ENCODE measurements at regions of chr12 and their contacts with region 1.

Region 1: DNA sequence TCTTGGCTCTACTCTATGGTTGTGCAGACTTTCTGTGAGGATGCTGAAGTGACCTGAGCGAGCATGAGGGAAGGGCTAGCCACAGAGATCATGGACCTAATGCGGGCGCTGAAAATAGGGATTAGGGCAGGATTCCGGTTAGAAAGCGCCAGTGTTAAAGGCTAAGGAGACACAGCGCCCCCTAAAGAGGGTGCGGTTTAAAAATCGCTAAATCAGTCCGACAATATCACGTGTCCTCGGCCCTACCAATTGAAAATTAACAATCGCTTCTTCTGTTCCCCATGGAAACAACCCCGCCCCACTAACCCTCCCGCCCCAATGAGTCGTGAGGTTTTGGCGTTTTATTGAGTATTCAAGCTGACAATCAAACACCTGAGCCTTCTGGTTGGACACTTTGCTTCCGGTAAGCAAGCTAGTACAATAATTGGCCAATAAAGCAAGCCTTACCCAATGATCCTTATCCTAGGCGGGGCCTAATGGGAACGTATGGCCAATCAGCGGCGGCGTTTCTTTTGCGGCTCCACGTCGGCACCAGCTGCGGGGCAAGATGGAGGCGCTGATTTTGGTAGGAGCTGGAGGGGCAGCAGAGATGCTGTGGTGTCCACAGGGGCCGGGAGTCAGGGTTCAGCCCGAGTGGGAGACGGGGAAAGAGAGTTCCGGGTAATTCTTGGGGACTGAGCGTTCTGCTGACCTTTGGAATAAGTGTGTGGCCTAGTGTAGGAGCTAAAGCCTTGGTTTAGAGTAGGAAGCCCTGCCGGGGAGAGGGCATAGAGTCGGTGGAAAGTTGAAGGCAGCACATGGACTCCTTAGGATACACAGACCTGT is at the start of gene COPZ1:
- DNase-seq: peak; percentile 99 to 100 (median 100)
- H3K4me3 ChIP-seq: peak within 1 kb of the TSS; percentile 38 to 99 (median 91)
- H3K27ac ChIP-seq: peak within 1 kb of the TSS; percentile 83 to 94
- H3K4me1 ChIP-seq: peaks cover 6 to 23% (median 18%) of the 10 kb centered on the region in 4 experiments
- H3K27me3 ChIP-seq: no peaks in the 10 kb centered on the region

Region 2: GRCh38 chr12:54214553-54215406 is 110.0 kb before region 1 on chr12:
- CTCF ChIA-PET with region 1: no interaction called
- POLR2A ChIA-PET with region 1: no interaction called
- DNase-seq: peak; percentile 94 to 96 (median 94)
- H3K4me3 ChIP-seq: peak overlapping the region in 6 of 7 experiments; percentile 21 to 75 (median 42)
- H3K27ac ChIP-seq: no peak overlapping the region
- H3K4me1 ChIP-seq: peaks cover 8 to 34% (median 30%) of the 10 kb centered on the region in 4 experiments
- H3K27me3 ChIP-seq: peaks cover 0 to 38% (median 23%) of the 10 kb centered on the region in 5 experiments

Region 3: DNA sequence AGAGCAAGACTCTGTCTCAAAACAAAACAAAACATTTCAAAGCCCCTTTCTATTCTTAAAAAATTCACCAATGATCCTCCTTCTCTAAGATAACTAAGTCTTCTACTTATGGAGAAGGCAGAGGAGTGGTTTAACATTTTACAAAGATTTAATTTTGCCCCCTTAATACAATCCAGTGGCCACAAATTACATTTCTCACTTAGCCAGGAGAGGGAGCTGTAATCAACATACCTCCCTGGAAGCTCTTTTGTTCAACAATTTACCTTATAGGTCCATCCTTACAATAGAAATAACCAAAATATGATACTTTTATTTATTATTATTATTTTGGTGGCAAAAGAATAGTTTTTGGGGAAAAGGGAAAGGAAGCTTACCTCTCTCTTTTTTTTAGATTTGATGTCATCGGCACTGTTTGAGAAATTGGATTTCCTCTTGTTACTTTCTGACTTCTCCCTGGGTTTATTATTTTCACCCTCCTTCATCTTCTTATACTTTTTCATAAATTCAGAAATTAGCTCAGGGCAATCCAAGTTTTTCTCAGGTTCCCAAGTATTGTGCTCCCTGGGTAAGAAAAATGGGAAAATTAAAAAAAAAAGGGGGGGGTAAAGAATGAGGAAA is 73.1 kb before region 1 on chr12:
- CTCF ChIA-PET with region 1: interaction called, 10 read pairs
- POLR2A ChIA-PET with region 1: no interaction called
- DNase-seq: peak; percentile 62 to 82 (median 79)
- H3K4me3 ChIP-seq: no peak overlapping the region
- H3K27ac ChIP-seq: no peak overlapping the region
- H3K4me1 ChIP-seq: no peaks in the 10 kb centered on the region
- H3K27me3 ChIP-seq: no peaks in the 10 kb centered on the region

Region 4: DNA sequence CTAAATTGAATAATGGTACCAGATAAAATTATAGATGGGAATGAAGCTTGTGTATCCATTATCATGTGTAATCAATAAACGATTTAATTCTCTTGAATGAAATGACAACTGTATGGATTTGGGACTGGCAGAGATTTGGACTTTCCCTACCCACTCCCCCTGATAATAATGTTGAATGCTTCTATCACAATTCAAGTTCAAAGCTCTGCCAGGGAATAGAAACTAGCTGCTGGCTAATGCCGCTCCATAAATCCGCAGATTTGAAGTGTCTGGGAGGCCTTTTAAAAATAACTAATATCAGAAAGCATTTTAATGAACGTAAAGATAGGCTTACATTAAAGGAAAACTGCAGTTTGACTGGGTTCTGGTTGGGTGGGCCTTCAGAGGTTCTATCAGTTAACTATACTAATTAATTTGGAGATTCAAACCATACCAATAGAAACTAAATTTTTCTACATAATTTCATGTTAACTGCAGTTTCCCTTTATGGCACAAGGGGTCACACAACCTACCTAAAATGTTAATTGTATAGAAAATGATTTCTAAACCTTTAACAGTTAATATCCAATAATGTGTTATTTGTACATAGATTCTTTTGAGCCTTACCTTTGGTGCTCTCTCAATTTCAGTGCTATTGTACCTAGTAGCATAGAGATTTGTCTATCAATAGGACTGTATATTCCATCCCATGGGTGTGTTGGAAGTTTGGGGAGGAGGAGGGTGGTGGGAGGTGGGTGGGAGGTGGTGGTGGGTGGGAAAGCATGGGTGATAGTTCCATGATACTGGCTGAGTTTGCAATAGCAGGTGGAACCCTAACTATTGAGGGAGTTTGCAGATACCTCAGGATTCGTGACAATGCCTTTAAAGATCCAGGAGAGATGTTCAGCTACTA is 39.4 kb before region 1 on chr12:
- CTCF ChIA-PET with region 1: interaction called, 890 read pairs
- POLR2A ChIA-PET with region 1: interaction called, 11 read pairs
- DNase-seq: peak in 2 of 3 donors; percentile 50 to 55
- H3K4me3 ChIP-seq: peak overlapping the region in 5 of 7 experiments; percentile 26 to 68 (median 53)
- H3K27ac ChIP-seq: peak overlapping the region in 1 of 2 experiments; percentile 76
- H3K4me1 ChIP-seq: peaks cover 30 to 82% (median 66%) of the 10 kb centered on the region in 4 experiments
- H3K27me3 ChIP-seq: no peaks in the 10 kb centered on the region

Region 5: DNA sequence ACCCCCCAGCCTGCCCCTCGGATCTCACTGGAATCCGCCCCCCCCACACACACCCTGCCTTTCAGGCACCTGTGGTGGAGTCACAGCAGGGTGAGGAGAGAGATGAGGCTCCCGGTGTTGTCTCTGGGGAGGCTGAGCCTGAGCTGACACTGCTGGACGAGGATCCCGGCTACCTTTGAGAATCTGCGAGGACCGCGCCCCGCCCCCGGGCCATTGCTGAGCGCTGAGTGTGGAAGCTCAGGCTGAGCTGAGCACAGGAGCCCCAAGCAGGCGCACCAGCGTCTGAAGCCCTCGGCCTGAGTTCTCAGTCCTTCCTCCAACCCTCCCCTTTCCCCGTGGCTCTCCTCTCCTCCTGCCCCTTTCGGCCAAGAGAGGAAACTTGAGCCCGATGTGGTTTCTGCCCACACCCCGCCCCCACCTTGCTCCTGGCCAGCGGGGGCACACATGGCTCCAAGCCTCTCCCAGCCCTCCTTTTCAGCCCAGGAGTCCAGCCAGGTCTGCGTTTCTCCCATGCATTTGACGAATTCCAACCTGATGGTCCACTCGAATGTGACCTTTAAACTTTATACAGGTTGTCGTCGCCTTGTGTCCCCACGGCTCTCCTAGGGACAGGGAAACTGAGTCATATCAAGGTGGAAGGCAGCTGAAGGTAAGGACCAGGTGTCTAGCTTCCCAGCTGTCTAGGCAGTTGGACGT is 23.9 kb before region 1 on chr12 and contains the start of gene NFE2:
- CTCF ChIA-PET with region 1: interaction called, 890 read pairs
- POLR2A ChIA-PET with region 1: interaction called, 17 read pairs
- DNase-seq: peak in 2 of 3 donors; percentile 65 to 75
- H3K4me3 ChIP-seq: peak within 1 kb of the TSS; percentile 67 to 100 (median 96)
- H3K27ac ChIP-seq: peak within 1 kb of the TSS; percentile 91 to 95
- H3K4me1 ChIP-seq: peaks cover 42 to 84% (median 74%) of the 10 kb centered on the region in 4 experiments
- H3K27me3 ChIP-seq: no peaks in the 10 kb centered on the region

Region 6: DNA sequence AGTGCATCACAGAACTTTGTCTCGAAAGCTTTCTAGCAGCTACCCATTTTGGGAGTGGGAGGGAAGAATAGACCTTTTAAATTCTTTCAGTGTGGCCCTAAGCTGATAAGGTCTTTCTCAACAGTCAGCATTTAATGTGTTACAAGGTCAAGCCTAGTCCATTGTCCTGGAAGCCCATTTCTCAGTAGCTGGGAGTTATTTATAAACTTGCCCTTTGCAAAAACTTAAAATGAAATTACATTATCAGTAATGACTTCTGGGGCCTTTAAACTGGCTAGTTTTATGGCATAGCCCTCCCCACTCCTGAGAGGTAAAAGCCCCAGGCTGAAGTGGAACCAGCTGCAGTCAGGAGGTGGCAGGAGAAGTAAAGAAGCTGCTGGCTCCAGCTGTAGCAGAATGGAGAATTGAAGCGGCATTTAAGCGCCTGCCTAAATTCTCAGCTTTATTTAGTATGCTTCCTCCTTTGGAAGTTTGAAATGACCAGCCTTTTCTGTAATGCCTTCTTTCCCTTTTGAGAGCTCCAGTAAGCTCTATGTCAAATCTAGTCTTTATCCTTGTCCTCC is 12.5 kb after region 1 on chr12:
- CTCF ChIA-PET with region 1: interaction called, 41 read pairs
- POLR2A ChIA-PET with region 1: interaction called, 4 read pairs
- DNase-seq: peak in 2 of 3 donors; percentile 59 to 68
- H3K4me3 ChIP-seq: no peak overlapping the region
- H3K27ac ChIP-seq: peak overlapping the region in 1 of 2 experiments; percentile 64
- H3K4me1 ChIP-seq: peaks cover 0 to 16% (median 6%) of the 10 kb centered on the region in 4 experiments
- H3K27me3 ChIP-seq: no peaks in the 10 kb centered on the region

Region 7: DNA sequence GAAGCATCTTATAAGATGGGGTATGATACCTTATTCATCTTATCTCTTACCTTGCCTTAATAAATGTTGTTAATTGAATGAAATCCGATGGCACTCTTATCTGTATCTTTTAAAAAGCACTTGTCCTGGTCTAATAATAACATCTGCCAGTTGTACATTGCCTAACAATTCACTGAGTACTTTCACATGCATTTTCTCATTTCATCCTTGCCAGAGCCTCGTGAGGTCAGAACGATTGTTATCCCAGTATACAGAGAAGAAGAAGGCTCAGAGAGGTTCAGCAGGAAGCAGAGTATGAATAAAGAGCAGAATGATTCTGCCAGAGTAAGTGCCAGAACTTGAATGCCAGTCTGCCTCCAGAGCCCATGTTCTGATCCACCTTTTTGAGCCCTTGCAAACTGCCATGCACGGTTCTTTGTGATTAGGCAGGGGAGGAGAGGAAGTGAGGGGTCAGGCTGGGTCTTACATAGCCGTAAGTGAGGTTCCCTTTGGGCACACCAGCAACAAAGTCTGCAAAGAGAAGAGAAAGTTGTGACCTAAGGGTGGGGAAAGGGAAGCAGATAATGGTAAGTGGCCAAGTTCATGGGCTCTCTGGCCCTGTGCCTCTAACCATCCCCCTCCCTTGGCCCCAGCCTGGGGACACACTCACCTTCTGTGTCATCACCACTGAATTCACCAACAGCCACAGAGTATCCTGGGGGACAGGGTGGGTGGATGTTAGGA is 82.5 kb after region 1 on chr12:
- CTCF ChIA-PET with region 1: no interaction called
- POLR2A ChIA-PET with region 1: no interaction called
- DNase-seq: no peak
- H3K4me3 ChIP-seq: no peak overlapping the region
- H3K27ac ChIP-seq: peak overlapping the region; percentile 25 to 65
- H3K4me1 ChIP-seq: peaks cover 2 to 50% (median 26%) of the 10 kb centered on the region in 4 experiments
- H3K27me3 ChIP-seq: no peaks in the 10 kb centered on the region